Ascending aorta (tissue), 2 donors: ENCODE measurements at regions of chr7 and their contacts with region 1.

Region 1: GRCh38 chr7:107939573-107940489 is 48.8 kb downstream of the DLD start:
- DNase-seq: peak in 1 of 2 donors; percentile 88
- H3K4me3 ChIP-seq: no peak overlapping the region
- H3K27ac ChIP-seq: peak overlapping the region; percentile 85 to 88
- H3K4me1 ChIP-seq: peaks cover 13 to 22% of the 10 kb centered on the region in 2 donors
- H3K27me3 ChIP-seq: no peaks in the 10 kb centered on the region
- CTCF ChIP-seq: no peak

Region 2: GRCh38 chr7:107551936-107552335 is 387.9 kb before region 1 on chr7:
- intact Hi-C with region 1: no loop called
- DNase-seq: no peak
- H3K4me3 ChIP-seq: no peak overlapping the region
- H3K27ac ChIP-seq: no peak overlapping the region
- H3K4me1 ChIP-seq: no peaks in the 10 kb centered on the region
- H3K27me3 ChIP-seq: no peaks in the 10 kb centered on the region
- CTCF ChIP-seq: no peak

Region 3: GRCh38 chr7:108045154-108045553 is 105.3 kb after region 1 on chr7:
- intact Hi-C with region 1: no loop called
- DNase-seq: no peak
- H3K4me3 ChIP-seq: no peak overlapping the region
- H3K27ac ChIP-seq: peak overlapping the region; percentile 2 to 38
- H3K4me1 ChIP-seq: no peaks in the 10 kb centered on the region
- H3K27me3 ChIP-seq: no peaks in the 10 kb centered on the region
- CTCF ChIP-seq: no peak

Region 4: DNA sequence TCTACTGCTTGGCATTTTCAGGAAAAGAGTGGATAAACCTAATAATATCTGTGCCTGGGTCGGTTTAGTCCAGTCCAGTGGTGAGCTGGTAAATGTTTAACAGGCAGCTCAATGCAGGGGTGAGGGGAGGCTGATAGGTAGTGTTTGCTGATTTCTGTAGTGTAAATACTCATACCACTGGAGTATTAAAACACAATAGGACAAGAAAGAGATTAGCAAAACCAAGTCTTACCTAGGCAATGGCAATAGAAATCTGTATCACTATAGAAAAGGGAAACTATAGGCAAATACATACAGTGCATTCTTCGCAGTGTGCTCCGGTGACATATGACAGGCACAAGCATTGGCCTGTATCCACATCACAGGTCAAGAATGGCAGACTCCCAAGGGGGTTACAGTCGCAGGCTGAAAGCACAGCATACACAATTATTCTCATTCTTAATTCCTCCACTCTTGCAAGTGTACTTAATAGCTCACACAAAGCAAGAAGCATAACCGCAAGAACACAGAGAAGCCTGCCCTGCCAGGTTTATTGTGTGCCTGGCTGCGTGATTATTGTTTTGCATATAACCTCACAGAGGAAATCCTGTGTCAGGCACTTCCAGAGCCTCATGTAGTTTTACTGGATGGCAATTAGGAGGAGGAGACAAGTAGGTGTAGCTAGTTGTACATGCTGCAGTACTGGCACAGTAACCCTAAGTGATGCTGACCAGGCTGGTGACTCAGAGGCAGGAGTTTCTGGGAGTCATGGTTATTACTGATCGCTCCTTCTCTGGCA is 155.3 kb after region 1 on chr7:
- intact Hi-C with region 1: loop called (anchors 10 kb)
- DNase-seq: peak; percentile 34 to 78
- H3K4me3 ChIP-seq: no peak overlapping the region
- H3K27ac ChIP-seq: no peak overlapping the region
- H3K4me1 ChIP-seq: peaks cover 0 to 8% of the 10 kb centered on the region in 2 donors
- H3K27me3 ChIP-seq: no peaks in the 10 kb centered on the region
- CTCF ChIP-seq: no peak